Activated CD8-positive, alpha-beta T cell treated with anti-CD3 and anti-CD28 coated beads for 36 hours (primary cell): ENCODE measurements at regions of chr18 and their contacts with region 1.

Region 1: GRCh38 chr18:75209129-75209950 is at the start of gene PTGR3:
- DNase-seq: peak; percentile 89
- ATAC-seq: peak; percentile 66
- H3K4me3 Mint-ChIP-seq: peak within 1 kb of the TSS; percentile 94
- H3K27ac Mint-ChIP-seq: peak within 1 kb of the TSS; percentile 98
- H3K4me1 Mint-ChIP-seq: peaks cover 52% of the 10 kb centered on the region
- H3K27me3 Mint-ChIP-seq: peaks cover 17% of the 10 kb centered on the region
- CTCF ChIP-seq: no peak
- total RNA-seq, gene PTGR3: 20.0 to 21.1 TPM

Region 2: GRCh38 chr18:75074196-75075015 is 134.9 kb before region 1 on chr18:
- CTCF ChIA-PET with region 1: no interaction called
- POLR2A ChIA-PET with region 1: no interaction called
- intact Hi-C with region 1: no loop called
- DNase-seq: no peak
- ATAC-seq: no peak
- H3K4me3 Mint-ChIP-seq: no peak overlapping the region
- H3K27ac Mint-ChIP-seq: no peak overlapping the region
- H3K4me1 Mint-ChIP-seq: peaks cover 27% of the 10 kb centered on the region
- H3K27me3 Mint-ChIP-seq: no peaks in the 10 kb centered on the region
- CTCF ChIP-seq: no peak

Region 3: GRCh38 chr18:75226286-75226955 is 17.1 kb after region 1 on chr18:
- CTCF ChIA-PET with region 1: interaction called, 3 read pairs
- POLR2A ChIA-PET with region 1: interaction called, 19 read pairs
- intact Hi-C with region 1: no loop called
- DNase-seq: peak; percentile 38
- ATAC-seq: peak; percentile 38
- H3K4me3 Mint-ChIP-seq: peak overlapping the region; percentile 13
- H3K27ac Mint-ChIP-seq: peak overlapping the region; percentile 24
- H3K4me1 Mint-ChIP-seq: peaks cover 56% of the 10 kb centered on the region
- H3K27me3 Mint-ChIP-seq: no peaks in the 10 kb centered on the region
- CTCF ChIP-seq: no peak

Region 4: DNA sequence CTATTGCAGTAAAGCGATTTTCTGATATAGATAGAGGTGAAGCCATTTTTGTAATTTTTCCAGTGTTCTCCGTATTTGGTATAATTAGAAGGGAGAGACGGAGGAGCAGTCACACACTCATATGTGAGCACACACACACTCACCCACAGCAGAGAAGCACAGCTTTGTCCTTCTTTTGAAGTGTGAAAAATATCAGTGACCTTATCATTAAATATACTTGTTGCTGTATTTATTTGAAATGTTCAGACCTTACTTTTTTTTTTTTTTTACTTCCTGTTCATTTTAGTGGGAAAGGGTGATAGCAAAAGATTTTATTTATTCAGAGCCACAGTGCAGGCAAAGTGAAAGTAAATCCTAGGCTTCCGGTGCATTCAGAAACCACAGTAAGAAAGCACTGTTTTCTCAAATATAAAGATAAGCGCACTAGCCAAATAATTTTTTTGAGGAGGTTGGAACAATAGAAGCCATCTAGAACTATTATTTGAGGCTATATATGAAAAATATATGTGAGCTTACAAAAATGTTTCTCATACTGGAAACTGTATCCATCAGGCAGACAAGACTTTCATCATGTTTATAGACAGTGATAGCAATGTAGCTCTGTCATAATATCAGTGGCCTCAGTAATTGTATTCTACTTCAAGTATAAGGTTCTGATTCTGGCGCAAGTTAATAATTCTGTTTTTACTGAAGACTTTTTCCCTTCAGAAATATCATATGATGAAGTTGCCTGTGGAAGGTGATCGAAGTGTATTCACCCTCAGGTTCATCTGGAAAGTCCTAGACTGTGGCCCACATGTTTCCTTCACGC is 38.5 kb after region 1 on chr18:
- CTCF ChIA-PET with region 1: interaction called, 7 read pairs
- POLR2A ChIA-PET with region 1: interaction called, 10 read pairs
- intact Hi-C with region 1: loop called (anchors 5 kb)
- DNase-seq: peak; percentile 12
- ATAC-seq: peak; percentile 21
- H3K4me3 Mint-ChIP-seq: peak overlapping the region; percentile 82
- H3K27ac Mint-ChIP-seq: peak overlapping the region; percentile 93
- H3K4me1 Mint-ChIP-seq: peaks cover 59% of the 10 kb centered on the region
- H3K27me3 Mint-ChIP-seq: no peaks in the 10 kb centered on the region
- CTCF ChIP-seq: no peak

Region 5: DNA sequence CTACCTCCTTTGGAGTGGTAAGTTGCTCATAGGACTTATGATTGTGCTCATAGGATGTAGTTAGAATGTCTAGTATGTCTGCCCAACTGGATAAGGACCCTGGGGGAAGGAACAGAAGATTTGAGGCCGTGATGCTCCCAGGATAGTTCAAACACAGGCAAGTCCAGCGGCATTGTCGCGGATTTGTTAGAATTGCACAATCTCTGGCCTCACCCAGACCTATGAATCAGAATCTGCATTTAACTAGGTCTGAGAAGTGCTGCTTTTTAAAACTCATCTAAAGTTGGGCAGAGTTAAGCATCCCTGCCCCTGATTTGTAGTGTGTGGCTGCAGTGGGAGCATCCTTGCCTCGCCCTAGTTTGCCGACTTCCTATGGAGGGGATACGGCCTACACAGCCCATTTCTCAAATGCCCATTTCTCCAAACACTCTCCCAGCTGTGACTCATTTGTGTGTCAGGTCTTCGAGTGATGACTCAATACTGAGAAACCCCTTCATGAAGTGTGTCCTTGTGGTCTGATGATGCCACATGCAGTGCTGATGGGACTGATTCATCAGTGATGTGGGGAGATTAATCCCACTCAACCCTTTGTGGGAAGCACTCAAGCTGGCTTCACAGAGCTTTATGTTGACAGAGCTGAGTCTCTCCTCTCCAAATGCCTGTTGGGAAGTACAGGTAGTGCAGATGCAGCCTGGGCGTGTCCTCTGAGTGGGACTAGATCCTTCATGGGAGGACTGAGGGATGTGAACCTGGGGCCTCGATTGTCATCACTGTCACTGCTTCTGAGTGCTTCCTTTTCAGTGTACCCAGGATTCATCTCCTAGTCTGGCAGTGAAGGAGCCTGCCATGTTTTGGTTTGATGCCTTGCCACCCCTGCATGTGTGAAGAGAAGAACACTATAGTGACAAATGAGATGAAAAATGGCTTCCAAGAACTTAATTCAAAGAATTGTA is 199.5 kb after region 1 on chr18:
- CTCF ChIA-PET with region 1: no interaction called
- POLR2A ChIA-PET with region 1: no interaction called
- intact Hi-C with region 1: no loop called
- DNase-seq: peak; percentile 68
- ATAC-seq: peak; percentile 94
- H3K4me3 Mint-ChIP-seq: no peak overlapping the region
- H3K27ac Mint-ChIP-seq: no peak overlapping the region
- H3K4me1 Mint-ChIP-seq: peaks cover 13% of the 10 kb centered on the region
- H3K27me3 Mint-ChIP-seq: peaks cover 12% of the 10 kb centered on the region
- CTCF ChIP-seq: no peak